ENCODE measurements at regions of chr15 and their contacts with region 1.

Region 1: GRCh38 chr15:59074607-59075006 is 30.3 kb upstream of the CCNB2 start:
- DNase-seq: no peak
- H3K4me3 ChIP-seq: no peak overlapping the region
- H3K27ac ChIP-seq: no peak overlapping the region
- H3K4me1 ChIP-seq: no peaks in the 10 kb centered on the region
- CTCF ChIP-seq: no peak

Region 2: GRCh38 chr15:59063042-59063441 is 11.6 kb before region 1 on chr15:
- CTCF ChIA-PET with region 1: no interaction called
- POLR2A ChIA-PET with region 1: interaction called, 10 read pairs
- intact Hi-C with region 1: no loop called
- DNase-seq: no peak
- H3K4me3 ChIP-seq: no peak overlapping the region
- H3K27ac ChIP-seq: no peak overlapping the region
- H3K4me1 ChIP-seq: no peaks in the 10 kb centered on the region
- CTCF ChIP-seq: no peak

Measured in OCI-LY7 (cell line).